OCI-LY7 (cell line): ENCODE measurements at regions of chr10 and their contacts with region 1.

Region 1: GRCh38 chr10:58952747-58953466 is 223.5 kb upstream of the PHYHIPL start:
- DNase-seq: peak; percentile 31
- H3K4me3 ChIP-seq: no peak overlapping the region
- H3K27ac ChIP-seq: no peak overlapping the region
- H3K4me1 ChIP-seq: no peaks in the 10 kb centered on the region
- CTCF ChIP-seq: peak; percentile 88

Region 2: DNA sequence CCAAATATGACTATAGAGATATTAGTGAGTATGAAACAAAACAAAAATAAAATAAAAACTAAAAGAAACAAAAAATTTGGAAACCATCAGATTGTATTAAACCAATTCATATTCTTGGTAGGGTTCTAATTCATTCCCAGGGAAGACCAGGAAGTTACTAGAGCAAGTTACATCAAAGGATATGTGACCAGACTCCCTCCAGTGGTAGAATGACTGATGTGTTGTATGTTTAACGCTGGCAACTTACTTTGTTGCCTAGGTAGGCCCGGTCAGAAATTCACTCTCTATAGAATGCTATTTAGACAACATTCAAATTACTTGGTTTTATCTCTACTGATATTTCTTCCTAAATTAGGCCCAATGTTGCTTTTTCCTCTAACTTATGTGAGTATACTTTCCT is 228.8 kb after region 1 on chr10:
- CTCF ChIA-PET with region 1: no interaction called
- POLR2A ChIA-PET with region 1: interaction called, 3 read pairs
- intact Hi-C with region 1: loop called (anchors 1 kb)
- DNase-seq: peak; percentile 24
- H3K4me3 ChIP-seq: no peak overlapping the region
- H3K27ac ChIP-seq: no peak overlapping the region
- H3K4me1 ChIP-seq: no peaks in the 10 kb centered on the region
- CTCF ChIP-seq: peak; percentile 65

Region 3: DNA sequence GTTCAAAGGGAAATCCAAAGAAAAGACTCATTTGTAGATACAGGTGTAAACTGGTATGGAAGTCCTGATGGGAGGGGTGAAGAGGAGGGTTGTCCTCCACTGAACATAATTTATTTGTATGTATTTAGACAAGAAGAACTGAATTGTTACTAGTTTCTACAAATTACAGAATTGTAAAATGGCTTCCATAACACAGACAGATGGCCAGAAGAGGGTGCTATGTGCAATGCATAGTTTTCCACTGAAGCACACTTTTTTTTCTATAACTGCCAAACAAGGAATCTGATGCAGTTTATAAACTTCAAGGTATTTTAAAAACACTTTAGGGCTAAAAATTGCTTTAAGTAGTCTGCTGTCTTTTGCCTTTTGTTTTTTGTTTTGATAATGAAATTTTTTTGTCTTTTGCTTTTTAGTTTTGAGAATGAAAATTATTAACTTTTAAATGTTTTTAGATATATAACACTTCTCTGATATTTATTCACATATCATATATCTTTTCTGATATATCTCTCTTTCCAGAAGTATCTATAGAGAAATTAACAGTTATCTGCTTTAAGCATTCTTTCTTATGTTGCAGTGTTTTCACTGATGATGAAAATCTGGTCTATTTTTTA is 282.0 kb after region 1 on chr10:
- CTCF ChIA-PET with region 1: no interaction called
- POLR2A ChIA-PET with region 1: no interaction called
- intact Hi-C with region 1: loop called (anchors 2 kb)
- DNase-seq: peak; percentile 16
- H3K4me3 ChIP-seq: no peak overlapping the region
- H3K27ac ChIP-seq: no peak overlapping the region
- H3K4me1 ChIP-seq: no peaks in the 10 kb centered on the region
- CTCF ChIP-seq: peak; percentile 84